ENCODE measurements at regions of chr9 and their contacts with region 1.

Region 1: GRCh38 chr9:73081979-73082657 is 69.5 kb upstream of the ANXA1 start:
- DNase-seq: peak; percentile 49 to 92
- ATAC-seq: peak; percentile 58 to 61; a peak in 5 of 6 replicates
- H3K4me3 ChIP-seq: no peak overlapping the region
- H3K27ac ChIP-seq: peak overlapping the region; percentile 82 to 94
- H3K4me1 ChIP-seq: peaks cover 80% of the 10 kb centered on the region
- CTCF ChIP-seq: peak; percentile 94
- EP300 ChIP-seq: no peak
- POLR2A ChIP-seq: no peak
- RAD21 ChIP-seq: peak; percentile 94 to 95

Region 2: DNA sequence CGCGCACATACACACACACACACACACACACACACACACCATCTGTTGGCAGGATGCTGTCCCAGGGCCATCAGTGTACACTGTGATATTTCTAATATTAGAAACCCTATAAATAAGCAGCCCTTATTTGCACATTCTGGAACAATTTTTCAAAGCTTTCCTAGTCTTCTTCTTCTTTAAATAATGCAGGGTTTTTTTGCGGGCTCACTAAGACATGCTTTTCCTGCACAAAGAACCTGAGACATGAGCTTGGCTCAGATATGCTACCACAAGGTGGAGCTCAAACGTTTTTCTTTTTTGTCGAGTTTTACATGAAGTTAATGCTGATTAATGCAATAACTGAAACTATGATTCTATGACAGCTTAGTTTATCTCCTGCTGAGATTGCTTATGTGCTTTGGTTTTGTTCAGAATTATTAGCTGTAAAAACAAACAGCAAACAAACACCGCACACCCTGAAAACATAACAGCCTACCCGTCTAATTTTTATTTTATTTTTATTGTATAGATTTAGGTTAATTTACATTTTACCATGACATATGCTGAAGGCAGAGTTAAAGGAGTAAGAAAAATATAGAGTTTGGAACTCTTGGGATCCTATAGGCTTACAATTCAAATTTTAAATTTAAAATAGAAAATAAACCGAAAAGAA is 225.0 kb before region 1 on chr9:
- CTCF ChIA-PET with region 1: interaction called, 54 read pairs
- POLR2A ChIA-PET with region 1: no interaction called
- DNase-seq: peak; percentile 66 to 92
- ATAC-seq: peak; percentile 75
- H3K4me3 ChIP-seq: no peak overlapping the region
- H3K27ac ChIP-seq: peak overlapping the region; percentile 92 to 93
- H3K4me1 ChIP-seq: peaks cover 43% of the 10 kb centered on the region
- CTCF ChIP-seq: peak; percentile 82
- EP300 ChIP-seq: no peak
- POLR2A ChIP-seq: no peak
- RAD21 ChIP-seq: peak; percentile 80 to 82

Region 3: DNA sequence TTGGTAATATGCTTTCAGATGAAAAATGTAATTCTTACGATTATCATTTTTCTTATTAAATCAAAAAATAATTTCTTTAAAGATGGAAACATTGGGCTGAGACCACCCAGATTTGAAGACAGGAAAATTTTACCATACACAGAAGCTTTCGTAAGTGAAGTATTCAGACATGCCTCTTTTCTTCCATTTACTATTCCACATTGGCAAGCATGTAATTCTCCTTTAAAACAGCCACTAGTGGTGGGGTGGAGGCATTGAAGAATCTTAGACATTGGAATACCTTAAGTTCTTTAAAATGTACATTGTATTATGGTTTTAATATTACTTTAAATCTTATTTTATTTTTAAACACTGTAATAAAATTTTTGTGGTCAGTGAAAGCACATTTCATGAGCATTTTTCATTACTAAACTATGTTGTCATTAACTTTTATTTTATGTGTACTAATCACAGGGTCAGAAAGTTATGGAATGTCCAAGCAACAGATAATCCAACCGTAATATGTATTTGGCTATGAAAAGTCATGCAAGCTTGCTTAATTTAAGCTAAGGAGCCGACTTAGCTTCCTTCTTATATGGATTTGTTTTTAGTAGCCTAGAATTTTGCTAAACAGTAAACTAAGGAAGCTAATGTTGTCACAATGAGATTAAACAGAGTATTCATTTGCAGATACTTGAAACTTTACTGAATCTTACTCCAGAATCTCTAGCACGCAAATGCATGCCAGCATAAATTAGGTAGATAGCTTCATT is 31.9 kb before region 1 on chr9:
- CTCF ChIA-PET with region 1: interaction called, 32 read pairs
- POLR2A ChIA-PET with region 1: interaction called, 3 read pairs
- DNase-seq: peak; percentile 47 to 82
- ATAC-seq: peak; percentile 62 to 76; a peak in 4 of 6 replicates
- H3K4me3 ChIP-seq: peak overlapping the region; percentile 10; the same call in 1 of the 3 replicates
- H3K27ac ChIP-seq: peak overlapping the region; percentile 87 to 96
- H3K4me1 ChIP-seq: peaks cover 80% of the 10 kb centered on the region
- CTCF ChIP-seq: peak; percentile 20; the same call in 1 of the 3 replicates
- EP300 ChIP-seq: no peak
- POLR2A ChIP-seq: no peak
- RAD21 ChIP-seq: 0 out of 5 replicates have a peak, but pooled peaks have one; percentile 7 to 8

Region 4: DNA sequence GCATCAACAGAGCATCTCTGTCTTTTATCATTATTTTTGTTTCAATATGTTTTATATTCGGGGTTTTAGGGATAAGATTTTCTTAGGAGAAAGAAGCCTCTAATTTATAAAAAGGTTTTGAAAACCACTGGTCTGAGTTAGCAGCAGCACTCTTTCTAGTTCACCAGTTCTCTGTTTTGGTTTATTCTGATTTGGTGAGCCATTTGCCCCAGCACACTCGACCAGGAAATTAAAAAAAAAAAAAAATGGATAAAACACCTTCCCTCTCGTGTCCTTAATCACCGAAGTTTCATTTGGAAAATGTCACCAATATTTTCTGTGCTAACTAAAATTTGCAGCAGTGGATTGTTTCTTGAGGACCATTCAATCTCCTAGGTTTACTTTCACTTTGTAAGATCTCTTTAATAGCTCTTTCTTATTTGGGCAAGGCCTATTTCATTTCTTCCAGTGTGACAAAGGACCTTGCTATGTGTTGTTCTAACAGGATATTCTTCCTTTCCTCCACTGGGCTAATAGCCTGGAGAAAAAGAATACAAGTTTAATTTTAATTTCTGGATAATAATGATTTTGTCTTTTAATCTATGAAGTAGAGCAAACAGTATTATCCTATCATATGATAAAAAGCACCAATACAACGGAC is 11.7 kb after region 1 on chr9:
- CTCF ChIA-PET with region 1: interaction called, 10 read pairs
- POLR2A ChIA-PET with region 1: no interaction called
- DNase-seq: no peak
- ATAC-seq: peak in 1 of 2 experiments; percentile 20; a peak in 1 of 6 replicates
- H3K4me3 ChIP-seq: peak overlapping the region; percentile 38
- H3K27ac ChIP-seq: peak overlapping the region; percentile 83 to 88
- H3K4me1 ChIP-seq: peaks cover 54% of the 10 kb centered on the region
- CTCF ChIP-seq: no peak
- EP300 ChIP-seq: no peak
- POLR2A ChIP-seq: no peak
- RAD21 ChIP-seq: no peak

Region 5: DNA sequence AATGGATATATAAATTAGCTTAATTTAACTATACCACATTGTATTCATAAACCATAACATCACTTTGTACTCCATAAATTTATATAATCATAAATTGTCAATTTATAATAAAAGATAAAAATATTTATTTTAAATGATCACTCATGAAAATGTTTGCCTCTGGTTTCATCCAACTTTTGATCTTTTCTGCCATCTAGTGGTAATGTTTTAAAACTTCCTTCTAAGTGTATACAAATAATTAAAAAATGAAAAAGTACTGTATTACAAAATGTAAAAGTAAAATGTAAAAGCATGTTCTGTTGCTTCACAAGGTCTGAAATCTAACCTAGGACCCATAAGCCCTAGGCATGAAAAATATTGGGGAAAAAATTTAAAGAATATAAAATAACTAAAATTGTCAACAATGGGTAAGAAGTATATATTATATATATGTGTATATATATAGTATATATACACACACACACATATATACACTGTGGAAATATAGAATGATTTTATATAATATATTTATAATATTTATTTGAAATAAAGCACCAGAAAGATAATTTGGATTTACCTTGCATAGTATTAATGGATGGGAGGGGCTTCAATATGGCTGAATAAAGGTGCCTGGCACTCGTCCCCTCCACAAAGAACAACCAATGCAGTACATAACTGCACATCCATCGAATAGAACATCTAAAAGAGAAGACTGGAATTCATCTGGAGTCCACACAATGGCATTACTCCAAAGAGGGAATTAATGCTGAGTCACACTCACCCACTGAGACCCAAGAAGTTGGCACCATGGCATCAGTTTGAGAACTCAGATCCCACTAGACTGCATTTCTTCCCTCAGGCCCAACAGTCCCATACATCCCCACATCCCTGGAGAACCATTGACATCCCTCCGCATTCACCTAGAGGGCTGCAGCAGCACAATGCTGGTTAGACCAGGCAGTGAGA is 102.1 kb after region 1 on chr9:
- CTCF ChIA-PET with region 1: interaction called, 15 read pairs
- POLR2A ChIA-PET with region 1: no interaction called
- DNase-seq: peak in 1 of 2 experiments; percentile 65
- ATAC-seq: no peak
- H3K4me3 ChIP-seq: 0 out of 3 replicates have a peak overlapping the region, but pooled peaks have one; percentile 39
- H3K27ac ChIP-seq: peak overlapping the region; percentile 85 to 88
- H3K4me1 ChIP-seq: peaks cover 55% of the 10 kb centered on the region
- CTCF ChIP-seq: peak; percentile 66; the same call in 2 of the 3 replicates
- EP300 ChIP-seq: no peak
- POLR2A ChIP-seq: no peak
- RAD21 ChIP-seq: peak; percentile 80 to 89

Region 6: DNA sequence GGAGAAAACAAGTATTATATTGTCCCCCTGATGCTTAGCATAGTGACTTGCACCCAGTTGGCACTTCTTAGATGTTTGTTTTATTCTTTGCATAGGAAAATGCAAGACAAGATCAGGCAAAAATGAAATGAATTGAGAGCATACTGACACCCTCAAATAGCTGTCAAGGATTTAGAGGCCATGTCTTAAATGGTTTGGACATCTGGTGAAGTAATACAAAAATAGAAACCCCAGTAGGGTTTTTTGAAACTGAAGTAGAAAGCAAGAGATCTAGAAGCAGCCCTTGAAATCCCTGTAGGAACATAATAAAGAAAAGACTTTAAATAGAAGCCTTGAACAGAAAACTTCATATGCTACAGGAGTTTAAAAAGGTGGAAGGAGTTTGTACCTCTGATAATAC is 243.9 kb after region 1 on chr9:
- CTCF ChIA-PET with region 1: no interaction called
- POLR2A ChIA-PET with region 1: no interaction called
- DNase-seq: no peak
- ATAC-seq: no peak
- H3K4me3 ChIP-seq: no peak overlapping the region
- H3K27ac ChIP-seq: no peak overlapping the region
- H3K4me1 ChIP-seq: no peaks in the 10 kb centered on the region
- CTCF ChIP-seq: no peak
- EP300 ChIP-seq: no peak
- POLR2A ChIP-seq: no peak
- RAD21 ChIP-seq: no peak

Measured in A549 (cell line).